ENCODE measurements at regions of chr14 and their contacts with region 1.

Region 1: DNA sequence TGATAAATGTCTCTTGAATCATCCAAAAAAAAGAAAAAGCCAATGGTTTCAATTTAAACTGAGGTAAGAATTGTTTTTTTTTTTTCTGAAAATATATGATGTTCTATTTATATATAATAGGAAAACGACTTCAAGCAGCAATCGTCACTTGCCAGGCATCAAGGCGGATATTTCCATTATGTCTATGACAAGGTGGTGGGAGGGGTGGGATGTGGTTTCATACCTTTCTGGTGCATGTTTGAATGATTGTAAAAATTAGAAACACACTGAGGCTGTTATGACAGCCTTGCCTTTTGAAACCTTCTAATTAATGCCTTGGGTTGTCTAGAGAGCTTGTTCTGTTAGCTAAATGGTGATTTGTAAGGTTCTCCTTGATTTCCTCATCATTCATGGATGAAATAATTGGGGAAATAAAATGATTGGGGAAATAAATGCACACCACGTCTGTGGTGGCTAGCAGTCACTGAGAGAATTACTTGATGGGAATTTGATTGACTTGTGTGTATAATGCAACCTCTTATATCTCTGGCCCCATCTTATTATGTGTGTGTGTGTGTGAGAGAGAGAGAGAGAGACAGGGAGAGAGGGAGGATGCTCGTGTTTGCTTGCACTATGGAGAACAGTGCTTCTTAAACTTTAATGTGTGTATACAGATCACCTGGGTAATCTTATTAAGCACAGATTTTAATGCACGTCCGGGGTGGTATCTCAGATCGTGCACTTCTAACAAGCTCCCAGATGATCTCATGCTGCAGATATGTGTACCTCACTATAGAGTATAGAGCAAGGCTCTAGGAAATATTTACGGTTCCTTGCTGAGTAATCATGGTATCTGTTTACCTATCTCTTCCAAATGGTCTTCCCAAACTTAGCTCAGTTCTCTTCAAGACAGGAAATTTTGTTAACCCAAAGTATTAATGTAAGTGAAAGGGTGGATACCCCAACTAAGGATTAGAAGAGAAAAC is 502.6 kb downstream of the DIO2 start:
- DNase-seq: peak; percentile 33 to 37
- H3K4me3 ChIP-seq: no peak overlapping the region
- H3K4me3 Mint-ChIP-seq: peak overlapping the region; percentile 22
- H3K27ac Mint-ChIP-seq: peak overlapping the region; percentile 38
- H3K4me1 ChIP-seq: peaks cover 61% of the 10 kb centered on the region
- H3K4me1 Mint-ChIP-seq: peaks cover 51% of the 10 kb centered on the region
- H3K27me3 ChIP-seq: no peaks in the 10 kb centered on the region
- H3K27me3 Mint-ChIP-seq: no peaks in the 10 kb centered on the region
- CTCF ChIP-seq: no peak

Region 2: GRCh38 chr14:79584679-79585078 is 124.0 kb before region 1 on chr14:
- CTCF ChIA-PET with region 1: no interaction called
- POLR2A ChIA-PET with region 1: no interaction called
- intact Hi-C with region 1: loop called (anchors 10 kb)
- DNase-seq: no peak
- H3K4me3 ChIP-seq: no peak overlapping the region
- H3K4me3 Mint-ChIP-seq: no peak overlapping the region
- H3K27ac Mint-ChIP-seq: no peak overlapping the region
- H3K4me1 ChIP-seq: peaks cover 31% of the 10 kb centered on the region
- H3K4me1 Mint-ChIP-seq: peaks cover 6% of the 10 kb centered on the region
- H3K27me3 ChIP-seq: no peaks in the 10 kb centered on the region
- H3K27me3 Mint-ChIP-seq: no peaks in the 10 kb centered on the region
- CTCF ChIP-seq: no peak

Region 3: GRCh38 chr14:79661762-79662161 is 46.9 kb before region 1 on chr14:
- CTCF ChIA-PET with region 1: no interaction called
- POLR2A ChIA-PET with region 1: no interaction called
- intact Hi-C with region 1: no loop called
- DNase-seq: no peak
- H3K4me3 ChIP-seq: no peak overlapping the region
- H3K4me3 Mint-ChIP-seq: no peak overlapping the region
- H3K27ac Mint-ChIP-seq: no peak overlapping the region
- H3K4me1 ChIP-seq: no peaks in the 10 kb centered on the region
- H3K4me1 Mint-ChIP-seq: peaks cover 9% of the 10 kb centered on the region
- H3K27me3 ChIP-seq: no peaks in the 10 kb centered on the region
- H3K27me3 Mint-ChIP-seq: no peaks in the 10 kb centered on the region
- CTCF ChIP-seq: no peak

Region 4: GRCh38 chr14:79764323-79764722 is 55.6 kb after region 1 on chr14:
- CTCF ChIA-PET with region 1: no interaction called
- POLR2A ChIA-PET with region 1: no interaction called
- intact Hi-C with region 1: loop called (anchors 1 kb)
- DNase-seq: peak; percentile 54 to 61
- H3K4me3 ChIP-seq: no peak overlapping the region
- H3K4me3 Mint-ChIP-seq: peak overlapping the region; percentile 38
- H3K27ac Mint-ChIP-seq: peak overlapping the region; percentile 83
- H3K4me1 ChIP-seq: peaks cover 22% of the 10 kb centered on the region
- H3K4me1 Mint-ChIP-seq: peaks cover 18% of the 10 kb centered on the region
- H3K27me3 ChIP-seq: no peaks in the 10 kb centered on the region
- H3K27me3 Mint-ChIP-seq: no peaks in the 10 kb centered on the region
- CTCF ChIP-seq: no peak

Measured in Caco-2 (cell line).